Activated CD8-positive, alpha-beta T cell treated with anti-CD3 and anti-CD28 coated beads for 36 hours (primary cell): ENCODE measurements at regions of chr11 and their contacts with region 1.

Region 1: DNA sequence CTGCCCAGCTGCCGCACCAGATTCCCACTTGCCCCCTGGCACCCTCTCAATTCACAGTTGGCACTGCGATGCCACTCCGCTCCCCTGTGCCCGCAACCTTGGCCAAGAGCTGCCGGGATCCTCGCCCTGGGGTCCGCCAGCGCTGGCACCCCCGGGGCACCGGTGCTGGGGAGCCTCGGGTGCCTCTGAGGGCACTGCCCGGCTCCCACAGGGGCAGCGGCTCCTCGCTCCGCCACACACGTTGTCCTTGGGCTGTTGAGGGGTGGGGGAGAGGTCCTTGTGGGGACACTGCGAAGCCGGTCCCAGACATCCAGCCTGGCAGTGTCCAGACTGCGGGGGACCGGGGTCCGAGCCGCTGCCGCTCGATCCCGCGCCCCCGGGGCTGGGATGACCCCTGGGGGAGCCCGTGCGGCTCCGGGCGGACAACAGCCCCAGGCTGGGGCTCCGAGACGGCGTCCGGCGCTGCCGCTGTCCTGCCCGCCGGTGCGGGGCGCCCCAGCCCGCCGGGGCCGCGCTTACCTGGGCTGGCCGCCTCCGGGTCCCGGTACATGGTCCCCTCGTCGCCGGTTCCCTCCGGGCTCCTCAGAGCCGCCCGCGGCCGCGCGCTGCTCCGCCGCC is 496 bp downstream of the SYT7 start:
- DNase-seq: no peak
- ATAC-seq: peak; percentile 2
- H3K4me3 Mint-ChIP-seq: peak overlapping the region; percentile 41
- H3K27ac Mint-ChIP-seq: no peak overlapping the region
- H3K4me1 Mint-ChIP-seq: peaks cover 8% of the 10 kb centered on the region
- H3K27me3 Mint-ChIP-seq: peaks cover 39% of the 10 kb centered on the region
- CTCF ChIP-seq: no peak

Region 2: GRCh38 chr11:61406067-61406466 is 174.3 kb before region 1 on chr11:
- CTCF ChIA-PET with region 1: no interaction called
- POLR2A ChIA-PET with region 1: no interaction called
- intact Hi-C with region 1: no loop called
- DNase-seq: no peak
- ATAC-seq: no peak
- H3K4me3 Mint-ChIP-seq: no peak overlapping the region
- H3K27ac Mint-ChIP-seq: no peak overlapping the region
- H3K4me1 Mint-ChIP-seq: peaks cover 1% of the 10 kb centered on the region
- H3K27me3 Mint-ChIP-seq: no peaks in the 10 kb centered on the region
- CTCF ChIP-seq: no peak

Region 3: DNA sequence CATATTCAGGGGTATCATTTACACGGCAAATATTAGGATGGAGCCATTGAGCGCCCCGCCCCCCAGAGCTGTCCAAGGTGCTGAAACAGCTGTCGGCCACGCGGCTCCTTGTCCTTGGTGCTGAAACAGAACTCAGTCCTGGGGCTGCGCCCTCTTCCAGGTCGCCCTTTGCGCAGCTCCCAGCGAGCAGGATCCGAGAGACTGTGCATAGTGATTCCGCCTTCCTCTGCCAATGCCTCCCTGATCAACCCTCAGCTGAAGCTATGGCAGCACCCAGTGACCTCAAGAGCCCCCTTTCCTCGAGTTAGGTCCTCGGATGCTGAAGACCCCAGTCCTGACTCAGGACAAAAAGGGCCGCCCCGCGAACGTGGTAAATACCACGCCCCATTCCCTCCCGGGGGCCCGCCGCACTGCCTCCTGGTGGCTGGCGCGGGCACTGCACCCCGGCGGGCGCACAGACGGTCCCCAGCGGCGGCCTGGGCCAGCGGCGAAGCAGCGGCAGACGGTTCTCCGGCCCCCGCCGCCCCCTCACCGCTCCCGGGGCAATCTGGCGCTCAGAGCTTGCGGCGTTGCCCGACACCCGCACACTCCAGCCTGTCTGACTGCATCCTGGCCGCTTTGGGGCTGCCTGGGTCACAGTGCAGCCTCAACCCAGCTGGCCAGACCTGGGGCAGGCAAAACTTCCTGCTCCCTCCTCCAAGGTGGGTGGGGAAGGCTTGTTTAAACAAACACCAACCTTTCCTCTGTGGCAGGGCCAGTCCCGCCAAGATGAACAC is 12.9 kb before region 1 on chr11:
- CTCF ChIA-PET with region 1: interaction called, 10 read pairs
- POLR2A ChIA-PET with region 1: no interaction called
- intact Hi-C with region 1: no loop called
- DNase-seq: peak; percentile 83
- ATAC-seq: peak; percentile 94
- H3K4me3 Mint-ChIP-seq: no peak overlapping the region
- H3K27ac Mint-ChIP-seq: no peak overlapping the region
- H3K4me1 Mint-ChIP-seq: no peaks in the 10 kb centered on the region
- H3K27me3 Mint-ChIP-seq: peaks cover 38% of the 10 kb centered on the region
- CTCF ChIP-seq: peak; percentile 65

Region 4: DNA sequence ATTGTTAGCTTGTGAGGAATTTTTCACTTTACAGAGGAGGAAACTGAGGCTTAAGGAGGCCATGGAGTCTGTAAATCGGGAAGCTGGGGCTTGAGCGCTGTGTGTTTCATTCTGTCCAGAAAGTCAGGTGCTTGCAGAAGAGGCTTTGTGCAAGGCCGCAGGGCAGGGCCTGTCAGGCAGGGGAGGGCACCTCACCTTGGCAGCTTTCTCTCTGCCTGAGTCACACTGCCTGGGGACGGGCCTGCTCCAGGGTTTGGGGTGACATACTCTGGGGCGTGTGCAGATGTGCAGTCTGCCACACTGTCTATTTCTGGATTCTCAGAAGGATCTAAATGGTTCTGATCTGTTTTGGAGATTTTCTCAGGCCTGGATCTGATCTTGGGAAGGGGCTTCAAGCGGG is 551.8 kb after region 1 on chr11:
- CTCF ChIA-PET with region 1: no interaction called
- POLR2A ChIA-PET with region 1: no interaction called
- intact Hi-C with region 1: no loop called
- DNase-seq: no peak
- ATAC-seq: no peak
- H3K4me3 Mint-ChIP-seq: no peak overlapping the region
- H3K27ac Mint-ChIP-seq: no peak overlapping the region
- H3K4me1 Mint-ChIP-seq: peaks cover 19% of the 10 kb centered on the region
- H3K27me3 Mint-ChIP-seq: no peaks in the 10 kb centered on the region
- CTCF ChIP-seq: no peak